Kidney (tissue), 22 donors: ENCODE measurements at regions of chrX and their contacts with region 1.

Region 1: GRCh38 chrX:12894074-12895030 is 12.1 kb upstream of the TLR8 start:
- DNase-seq: peak in 3 of 5 donors; percentile 16 to 42 (median 35)
- H3K4me3 ChIP-seq: no peak overlapping the region
- H3K27ac ChIP-seq: no peak overlapping the region
- H3K4me1 ChIP-seq: no peaks in the 10 kb centered on the region
- H3K27me3 ChIP-seq: no peaks in the 10 kb centered on the region
- CTCF ChIP-seq: peak; percentile 32

Region 2: DNA sequence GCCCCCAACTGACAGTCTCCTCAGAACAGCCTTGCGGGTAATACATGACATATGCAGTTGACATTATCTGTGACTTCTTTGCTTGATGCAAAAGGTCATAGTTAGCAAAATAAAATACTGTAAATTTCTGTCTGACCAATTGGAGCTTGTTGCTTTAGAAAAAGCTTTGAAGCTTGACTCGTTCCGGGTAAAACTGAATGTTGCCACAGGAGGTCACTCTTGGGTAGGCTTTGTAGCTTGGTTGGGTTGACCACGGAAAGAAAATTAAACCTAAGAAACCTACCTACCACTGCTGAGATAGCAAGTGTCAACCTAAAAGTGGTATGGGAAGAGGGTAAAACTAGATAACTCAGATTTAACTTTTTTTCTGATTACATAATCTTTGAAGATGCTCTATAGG is 79.9 kb before region 1 on chrX:
- intact Hi-C with region 1: loop called (anchors 10 kb)
- DNase-seq: peak in 4 of 5 donors; percentile 31 to 66 (median 47)
- H3K4me3 ChIP-seq: no peak overlapping the region
- H3K27ac ChIP-seq: no peak overlapping the region
- H3K4me1 ChIP-seq: no peaks in the 10 kb centered on the region
- H3K27me3 ChIP-seq: no peaks in the 10 kb centered on the region
- CTCF ChIP-seq: peak; percentile 41